Calu3 (cell line): ENCODE measurements at regions of chr4 and their contacts with region 1.

Region 1: GRCh38 chr4:48877827-48878533 is 28.6 kb downstream of the OCIAD2 start:
- DNase-seq: no peak
- H3K4me3 Mint-ChIP-seq: no peak overlapping the region
- H3K27ac Mint-ChIP-seq: no peak overlapping the region
- H3K4me1 Mint-ChIP-seq: no peaks in the 10 kb centered on the region
- H3K27me3 Mint-ChIP-seq: no peaks in the 10 kb centered on the region
- CTCF ChIP-seq: no peak

Region 2: GRCh38 chr4:48891028-48891619 is 13.1 kb after region 1 on chr4:
- CTCF ChIA-PET with region 1: no interaction called
- intact Hi-C with region 1: loop called (anchors 1 kb)
- DNase-seq: no peak
- H3K4me3 Mint-ChIP-seq: no peak overlapping the region
- H3K27ac Mint-ChIP-seq: no peak overlapping the region
- H3K4me1 Mint-ChIP-seq: no peaks in the 10 kb centered on the region
- H3K27me3 Mint-ChIP-seq: no peaks in the 10 kb centered on the region
- CTCF ChIP-seq: no peak